ENCODE measurements at regions of chr3 and their contacts with region 1.

Region 1: GRCh38 chr3:124786441-124787241 is 56.4 kb downstream of the UMPS start:
- DNase-seq: no peak
- ATAC-seq: peak; percentile 54
- H3K4me3 ChIP-seq: no peak overlapping the region
- H3K27ac ChIP-seq: peak overlapping the region in 1 of 2 donors; percentile 41
- H3K4me1 ChIP-seq: peaks cover 9 to 14% of the 10 kb centered on the region in 2 donors
- H3K27me3 ChIP-seq: no peaks in the 10 kb centered on the region
- CTCF ChIP-seq: peak; percentile 19 to 26

Region 2: DNA sequence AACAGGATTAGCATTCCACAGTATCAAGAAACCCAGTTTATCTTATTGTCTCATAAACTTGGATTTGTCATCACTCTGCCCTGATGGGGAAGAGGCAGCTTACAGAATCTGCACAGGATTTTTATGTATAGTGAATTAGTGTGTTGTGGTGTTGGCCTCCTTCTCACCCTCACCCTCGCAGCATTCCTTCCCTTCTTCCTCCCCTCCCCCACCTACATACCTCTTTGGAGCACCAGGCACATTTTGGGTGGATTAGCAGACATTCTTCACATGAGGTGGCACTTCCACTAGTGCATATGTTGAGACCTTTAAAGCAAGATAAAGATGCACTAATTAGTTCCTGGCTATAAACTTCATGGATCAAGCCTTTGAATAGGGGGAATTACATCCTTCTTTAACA is 86.6 kb after region 1 on chr3:
- intact Hi-C with region 1: no loop called
- DNase-seq: no peak
- ATAC-seq: no peak
- H3K4me3 ChIP-seq: no peak overlapping the region
- H3K27ac ChIP-seq: no peak overlapping the region
- H3K4me1 ChIP-seq: peaks cover 8 to 31% of the 10 kb centered on the region in 2 donors
- H3K27me3 ChIP-seq: no peaks in the 10 kb centered on the region
- CTCF ChIP-seq: no peak

Region 3: GRCh38 chr3:124887177-124887931 is 100.7 kb after region 1 on chr3 and contains the start of gene ITGB5:
- intact Hi-C with region 1: loop called in 1 of 2 experiments (anchors 5 kb)
- DNase-seq: peak; percentile 62 to 93 (median 78)
- ATAC-seq: peak; percentile 90
- H3K4me3 ChIP-seq: peak within 1 kb of the TSS; percentile 64
- H3K27ac ChIP-seq: peak within 1 kb of the TSS; percentile 76 to 85
- H3K4me1 ChIP-seq: peaks cover 0 to 17% of the 10 kb centered on the region in 2 donors
- H3K27me3 ChIP-seq: peaks cover 0 to 43% of the 10 kb centered on the region in 2 donors
- CTCF ChIP-seq: no peak
- polyA plus RNA-seq, gene ITGB5: 54.8 to 72.3 (median 66.3) TPM

Measured in left lung (tissue), 14 donors.